PC-9 (cell line): ENCODE measurements at regions of chr5 and their contacts with region 1.

Region 1: GRCh38 chr5:149474212-149474618 is 77.0 kb downstream of the CSNK1A1 start:
- DNase-seq: peak; percentile 82 to 84
- H3K4me3 ChIP-seq: no peak overlapping the region
- H3K27ac ChIP-seq: no peak overlapping the region
- H3K4me1 ChIP-seq: peaks cover 22% of the 10 kb centered on the region
- H3K27me3 ChIP-seq: no peaks in the 10 kb centered on the region
- CTCF ChIP-seq: no peak

Region 2: DNA sequence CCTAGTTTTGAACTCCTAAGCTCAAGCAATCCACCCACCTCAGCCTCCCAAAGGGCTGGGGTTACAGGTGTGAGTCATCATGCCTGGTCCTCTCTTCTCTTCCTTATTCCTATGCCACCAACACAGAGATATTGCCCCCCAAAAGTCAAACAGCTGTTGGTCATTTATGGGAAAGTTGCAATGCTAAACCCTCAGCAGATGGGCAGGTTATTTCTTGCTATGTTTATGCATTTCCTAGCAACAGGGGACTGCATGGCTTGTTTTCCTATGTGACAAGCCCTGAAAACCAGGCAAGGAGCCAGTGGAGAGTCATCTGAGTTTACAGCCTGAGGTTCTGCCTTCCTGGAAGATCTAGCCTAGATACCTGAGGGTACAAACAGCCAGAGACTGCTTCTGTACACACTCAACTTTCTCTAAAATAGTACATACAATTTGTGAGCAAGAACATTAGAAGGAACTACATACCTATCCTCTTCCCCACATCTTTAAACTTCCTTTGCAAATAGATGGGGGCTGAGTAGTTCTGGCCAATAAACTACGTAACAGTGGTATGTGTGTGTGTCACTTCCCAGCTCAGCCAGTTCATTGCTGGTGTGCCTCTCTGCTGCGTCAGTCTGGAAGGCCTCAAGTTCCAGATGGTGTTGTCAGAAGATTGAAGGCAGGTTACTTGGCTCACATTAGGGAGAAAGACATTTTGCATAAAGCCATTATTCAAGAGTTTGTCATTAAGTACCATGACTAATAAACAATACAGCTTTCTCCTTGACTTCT is 11.6 kb after region 1 on chr5:
- CTCF ChIA-PET with region 1: interaction called, 11 read pairs
- POLR2A ChIA-PET with region 1: interaction called, 4 read pairs
- intact Hi-C with region 1: loop called (anchors 1 kb)
- DNase-seq: peak; percentile 89 to 99
- H3K4me3 ChIP-seq: no peak overlapping the region
- H3K27ac ChIP-seq: peak overlapping the region; percentile 92
- H3K4me1 ChIP-seq: peaks cover 88% of the 10 kb centered on the region
- H3K27me3 ChIP-seq: no peaks in the 10 kb centered on the region
- CTCF ChIP-seq: no peak

Region 3: GRCh38 chr5:149820536-149821510 is 346.6 kb after region 1 on chr5:
- CTCF ChIA-PET with region 1: no interaction called
- POLR2A ChIA-PET with region 1: no interaction called
- intact Hi-C with region 1: no loop called
- DNase-seq: no peak
- H3K4me3 ChIP-seq: no peak overlapping the region
- H3K27ac ChIP-seq: no peak overlapping the region
- H3K4me1 ChIP-seq: no peaks in the 10 kb centered on the region
- H3K27me3 ChIP-seq: no peaks in the 10 kb centered on the region
- CTCF ChIP-seq: no peak